Motor neuron (in vitro differentiated cells): ENCODE measurements at regions of chr4 and their contacts with region 1.

Region 1: DNA sequence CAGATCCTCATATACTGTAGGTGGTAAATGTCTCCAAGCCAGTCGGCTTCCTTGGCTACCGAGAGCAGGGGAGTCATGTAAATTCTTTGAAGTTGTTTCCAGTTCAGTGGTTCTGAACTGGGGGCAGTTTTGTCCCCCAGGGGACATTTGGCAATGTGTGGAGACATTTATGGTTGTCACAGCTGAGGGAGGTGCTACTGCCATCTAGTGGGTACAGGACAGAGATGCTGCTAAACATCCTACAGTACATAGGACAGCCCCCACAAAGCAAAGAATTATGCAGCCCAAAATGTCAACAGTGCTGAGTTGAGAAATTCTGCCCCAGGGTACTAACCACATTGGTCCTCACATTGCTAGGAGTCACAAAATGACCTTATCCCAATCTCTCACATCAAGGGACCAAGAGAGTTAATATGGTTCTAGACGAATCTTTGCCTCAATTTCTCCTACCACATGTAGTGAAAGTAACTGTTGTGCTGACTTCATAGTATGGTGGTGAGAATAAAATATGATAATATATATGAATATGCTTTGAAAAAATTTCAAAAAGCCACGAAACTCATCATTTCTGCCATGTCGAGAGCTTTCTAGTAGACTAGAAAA is 104.4 kb upstream of the ARHGAP24 start:
- ATAC-seq: peak in 6 of 8 experiments; percentile 39 to 96 (median 80)
- H3K4me3 ChIP-seq: no peak overlapping the region
- H3K27ac ChIP-seq: no peak overlapping the region
- H3K4me1 ChIP-seq: peaks cover 6 to 8% of the 10 kb centered on the region in 2 donors

Region 2: DNA sequence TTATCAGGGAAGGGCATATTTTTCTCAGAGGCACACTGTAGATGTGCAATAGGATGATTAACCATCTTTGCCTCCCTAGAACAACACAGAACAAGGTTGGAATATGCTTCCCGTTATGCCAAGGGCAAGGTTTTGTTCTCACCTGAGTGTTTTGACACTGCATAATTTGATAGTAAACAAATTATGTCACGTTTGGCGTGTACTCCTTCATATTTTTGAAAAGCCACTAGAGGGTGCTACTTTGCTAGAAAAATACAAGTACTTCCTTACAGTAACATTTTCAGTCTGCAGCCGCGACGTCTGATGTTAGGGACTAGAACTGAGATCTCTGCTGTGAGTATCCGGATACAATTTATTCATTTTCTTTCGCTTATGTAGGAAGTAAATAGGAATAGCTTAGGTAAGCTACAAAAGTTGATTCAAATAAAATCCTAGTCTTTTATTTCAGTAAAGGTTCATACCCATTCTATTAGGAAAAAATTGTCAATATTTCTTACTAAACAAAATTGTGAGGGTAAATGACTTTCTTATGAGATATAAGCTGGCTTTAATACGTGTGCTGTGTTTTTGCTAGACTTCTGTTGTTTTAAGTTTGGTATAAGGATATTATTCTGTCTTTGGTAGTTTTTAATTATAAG is 223.0 kb before region 1 on chr4:
- in situ Hi-C with region 1: loop called in 1 of 9 experiments (anchors 25 kb)
- ATAC-seq: peak; percentile 44 to 81 (median 77)
- H3K4me3 ChIP-seq: peak overlapping the region in 1 of 5 donors; percentile 16
- H3K27ac ChIP-seq: no peak overlapping the region
- H3K4me1 ChIP-seq: peaks cover 0 to 4% of the 10 kb centered on the region in 2 donors

Region 3: DNA sequence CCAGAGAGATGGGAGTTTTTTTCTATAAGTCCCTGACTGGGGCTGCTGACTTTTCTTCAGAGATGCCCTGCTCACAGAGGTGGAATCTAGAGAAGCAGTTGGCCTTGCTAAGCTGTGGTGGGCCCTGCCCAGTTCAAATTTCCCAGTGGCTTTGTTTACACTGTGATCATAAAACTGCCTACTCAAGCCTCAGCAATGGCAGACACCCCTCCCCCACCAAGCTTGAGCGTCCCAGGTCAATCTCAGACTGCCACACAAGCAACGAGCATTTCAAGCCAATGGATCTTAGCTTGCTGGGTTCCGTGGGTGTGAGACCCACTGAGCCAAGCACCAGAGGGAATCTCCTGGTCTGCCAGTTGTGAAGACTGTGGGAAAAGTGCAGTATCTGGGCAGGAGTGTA is 204.2 kb before region 1 on chr4:
- in situ Hi-C with region 1: loop called in 2 of 9 experiments (anchors 10 to 25 kb)
- ATAC-seq: no peak
- H3K4me3 ChIP-seq: no peak overlapping the region
- H3K27ac ChIP-seq: no peak overlapping the region
- H3K4me1 ChIP-seq: peaks cover 3 to 9% of the 10 kb centered on the region in 2 donors